Caco-2 (cell line): ENCODE measurements at regions of chr22 and their contacts with region 1.

Region 1: DNA sequence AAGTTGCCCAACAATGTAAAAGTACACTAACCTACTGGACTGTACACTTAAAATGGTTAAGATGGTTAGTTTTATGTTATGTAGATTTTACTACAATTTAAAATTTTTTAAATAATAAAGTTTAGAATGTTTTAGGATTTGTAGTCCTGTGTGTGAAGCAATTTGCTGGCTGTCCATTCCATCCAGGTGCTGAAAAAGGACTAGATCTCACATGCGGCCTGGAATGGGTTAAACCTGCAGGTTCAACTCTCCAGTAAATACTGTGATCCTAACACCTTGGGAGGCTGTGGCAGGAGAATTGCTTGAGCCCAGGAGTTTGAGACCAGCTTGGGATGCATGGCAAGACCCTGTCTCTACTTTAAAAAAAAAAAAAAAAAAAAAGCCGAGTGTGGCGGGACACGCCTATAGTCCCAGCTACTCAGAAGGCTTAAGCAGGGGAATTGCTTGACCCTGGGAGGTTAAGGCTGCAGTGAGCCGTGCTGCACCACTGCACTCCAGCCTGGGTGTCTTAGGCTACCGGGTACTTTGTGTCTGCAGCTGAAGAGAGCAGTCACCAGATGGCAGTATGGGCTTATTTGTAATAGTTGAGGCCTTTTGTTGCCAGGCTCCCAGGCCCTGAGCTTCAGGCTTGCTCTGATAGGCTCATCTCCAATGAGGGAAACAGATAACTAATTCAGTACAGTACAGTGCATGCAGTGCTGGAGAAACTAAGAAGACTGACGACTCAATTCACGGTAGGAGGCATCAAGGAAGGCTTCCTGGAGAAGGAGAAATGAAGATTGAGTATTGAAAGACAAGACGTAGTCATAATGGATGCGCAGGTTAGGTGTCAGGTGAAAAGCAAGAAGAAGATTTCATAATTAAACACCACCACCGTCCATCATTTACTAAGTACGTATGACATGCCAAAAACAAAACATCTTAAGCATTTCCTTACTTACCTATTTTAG is 64.7 kb upstream of the ASPHD2 start:
- DNase-seq: peak; percentile 73 to 79
- H3K4me3 ChIP-seq: no peak overlapping the region
- H3K4me3 Mint-ChIP-seq: no peak overlapping the region
- H3K27ac Mint-ChIP-seq: no peak overlapping the region
- H3K4me1 ChIP-seq: no peaks in the 10 kb centered on the region
- H3K4me1 Mint-ChIP-seq: no peaks in the 10 kb centered on the region
- H3K27me3 ChIP-seq: no peaks in the 10 kb centered on the region
- H3K27me3 Mint-ChIP-seq: peaks cover 4% of the 10 kb centered on the region
- CTCF ChIP-seq: peak; percentile 62 to 72

Region 2: DNA sequence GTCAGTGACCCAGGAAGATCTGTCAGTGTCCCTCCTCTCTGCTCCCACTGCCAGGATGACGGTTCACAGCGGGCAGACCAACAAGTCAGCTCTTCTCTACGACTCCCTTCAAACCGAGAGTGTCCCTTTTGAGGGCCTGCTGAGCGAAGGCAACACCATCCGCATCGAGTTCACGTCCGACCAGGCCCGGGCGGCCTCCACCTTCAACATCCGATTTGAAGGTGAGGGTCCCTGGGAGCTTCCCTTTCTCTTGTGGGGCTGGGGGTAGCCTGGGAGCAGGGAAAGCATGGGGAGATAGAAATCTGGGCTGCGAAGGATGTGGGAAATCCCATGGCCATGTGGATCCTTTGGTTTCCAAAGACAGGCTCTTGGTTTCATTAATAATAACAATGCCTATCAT is 53.7 kb before region 1 on chr22:
- CTCF ChIA-PET with region 1: interaction called, 10 read pairs
- POLR2A ChIA-PET with region 1: no interaction called
- intact Hi-C with region 1: no loop called
- DNase-seq: no peak
- H3K4me3 ChIP-seq: no peak overlapping the region
- H3K4me3 Mint-ChIP-seq: no peak overlapping the region
- H3K27ac Mint-ChIP-seq: no peak overlapping the region
- H3K4me1 ChIP-seq: no peaks in the 10 kb centered on the region
- H3K4me1 Mint-ChIP-seq: no peaks in the 10 kb centered on the region
- H3K27me3 ChIP-seq: no peaks in the 10 kb centered on the region; the same call in 1 of the 2 replicates
- H3K27me3 Mint-ChIP-seq: peaks cover 15% of the 10 kb centered on the region
- CTCF ChIP-seq: no peak

Region 3: GRCh38 chr22:26345496-26345895 is 18.8 kb before region 1 on chr22:
- CTCF ChIA-PET with region 1: no interaction called
- POLR2A ChIA-PET with region 1: no interaction called
- intact Hi-C with region 1: no loop called
- DNase-seq: no peak
- H3K4me3 ChIP-seq: no peak overlapping the region
- H3K4me3 Mint-ChIP-seq: no peak overlapping the region
- H3K27ac Mint-ChIP-seq: no peak overlapping the region
- H3K4me1 ChIP-seq: no peaks in the 10 kb centered on the region
- H3K4me1 Mint-ChIP-seq: no peaks in the 10 kb centered on the region
- H3K27me3 ChIP-seq: no peaks in the 10 kb centered on the region
- H3K27me3 Mint-ChIP-seq: peaks cover 16% of the 10 kb centered on the region
- CTCF ChIP-seq: no peak

Region 4: DNA sequence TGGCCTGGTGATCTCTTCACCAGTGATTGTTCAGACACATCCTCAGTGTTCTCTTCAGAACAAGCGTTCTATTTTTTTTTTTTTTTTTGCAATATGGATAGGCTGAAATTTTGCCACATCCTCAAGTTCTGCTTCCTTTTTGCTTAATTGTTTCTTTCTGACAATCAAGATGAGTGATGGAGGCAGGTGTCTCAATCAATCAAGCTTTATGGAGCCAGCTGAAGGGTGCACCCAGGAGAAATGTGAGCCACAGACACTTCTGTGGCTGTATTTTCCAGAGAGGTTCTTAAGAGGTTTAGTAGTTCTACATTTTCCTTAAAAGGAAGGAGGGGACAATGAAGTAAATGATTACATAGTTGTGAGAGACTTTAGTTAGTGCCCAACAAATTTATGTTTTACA is 20.8 kb after region 1 on chr22:
- CTCF ChIA-PET with region 1: no interaction called
- POLR2A ChIA-PET with region 1: no interaction called
- intact Hi-C with region 1: no loop called
- DNase-seq: no peak
- H3K4me3 ChIP-seq: no peak overlapping the region
- H3K4me3 Mint-ChIP-seq: no peak overlapping the region
- H3K27ac Mint-ChIP-seq: no peak overlapping the region
- H3K4me1 ChIP-seq: no peaks in the 10 kb centered on the region
- H3K4me1 Mint-ChIP-seq: no peaks in the 10 kb centered on the region
- H3K27me3 ChIP-seq: no peaks in the 10 kb centered on the region; the same call in 1 of the 2 replicates
- H3K27me3 Mint-ChIP-seq: peaks cover 14% of the 10 kb centered on the region
- CTCF ChIP-seq: no peak

Region 5: GRCh38 chr22:26436903-26437515 is 72.7 kb after region 1 on chr22:
- CTCF ChIA-PET with region 1: interaction called, 10 read pairs
- POLR2A ChIA-PET with region 1: no interaction called
- intact Hi-C with region 1: no loop called
- DNase-seq: no peak
- H3K4me3 ChIP-seq: no peak overlapping the region
- H3K4me3 Mint-ChIP-seq: no peak overlapping the region
- H3K27ac Mint-ChIP-seq: no peak overlapping the region
- H3K4me1 ChIP-seq: no peaks in the 10 kb centered on the region
- H3K4me1 Mint-ChIP-seq: no peaks in the 10 kb centered on the region
- H3K27me3 ChIP-seq: no peaks in the 10 kb centered on the region
- H3K27me3 Mint-ChIP-seq: peaks cover 11% of the 10 kb centered on the region
- CTCF ChIP-seq: no peak

Region 6: DNA sequence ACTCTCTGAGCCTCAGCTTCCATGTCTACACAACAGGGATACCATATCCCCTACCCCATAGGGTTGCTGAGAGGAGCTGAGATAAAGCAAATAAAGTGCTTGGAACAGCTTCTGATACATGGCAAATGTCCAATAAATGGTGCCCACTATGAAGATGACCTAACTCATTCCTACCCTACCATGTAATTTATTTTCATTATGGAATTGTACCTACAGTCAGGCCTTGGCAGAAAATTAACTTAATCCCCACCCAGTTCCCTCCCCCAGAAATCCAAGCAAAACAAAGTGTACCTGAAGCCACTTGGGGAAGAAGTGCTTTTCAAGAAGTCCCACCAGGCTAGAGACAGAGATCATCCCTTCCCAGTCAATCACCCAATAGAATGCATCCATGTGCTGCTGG is 130.2 kb after region 1 on chr22:
- CTCF ChIA-PET with region 1: no interaction called
- POLR2A ChIA-PET with region 1: no interaction called
- intact Hi-C with region 1: no loop called
- DNase-seq: no peak
- H3K4me3 ChIP-seq: no peak overlapping the region
- H3K4me3 Mint-ChIP-seq: no peak overlapping the region
- H3K27ac Mint-ChIP-seq: no peak overlapping the region
- H3K4me1 ChIP-seq: no peaks in the 10 kb centered on the region
- H3K4me1 Mint-ChIP-seq: no peaks in the 10 kb centered on the region
- H3K27me3 ChIP-seq: no peaks in the 10 kb centered on the region
- H3K27me3 Mint-ChIP-seq: no peaks in the 10 kb centered on the region
- CTCF ChIP-seq: no peak